Activated CD4-positive, alpha-beta memory T cell treated with anti-CD3 and anti-CD28 coated beads, Interleukin-2, amount 10 ng/mL, durations not matched to agents 7 days and 5 days (primary cell): ENCODE measurements at regions of chr15 and their contacts with region 1.

Region 1: GRCh38 chr15:81274931-81275707 is 48.8 kb downstream of the STARD5 start:
- DNase-seq: peak; percentile 85
- H3K4me3 Mint-ChIP-seq: no peak overlapping the region
- H3K27ac Mint-ChIP-seq: peak overlapping the region; percentile 6
- H3K4me1 Mint-ChIP-seq: peaks cover 20% of the 10 kb centered on the region
- H3K27me3 Mint-ChIP-seq: no peaks in the 10 kb centered on the region

Region 2: GRCh38 chr15:81296673-81297072 is 21.6 kb after region 1 on chr15:
- CTCF ChIA-PET with region 1: interaction called, 31 read pairs
- POLR2A ChIA-PET with region 1: interaction called, 7 read pairs
- DNase-seq: peak; percentile 87
- H3K4me3 Mint-ChIP-seq: peak overlapping the region; percentile 98
- H3K27ac Mint-ChIP-seq: peak overlapping the region; percentile 96
- H3K4me1 Mint-ChIP-seq: peaks cover 64% of the 10 kb centered on the region
- H3K27me3 Mint-ChIP-seq: no peaks in the 10 kb centered on the region

Region 3: DNA sequence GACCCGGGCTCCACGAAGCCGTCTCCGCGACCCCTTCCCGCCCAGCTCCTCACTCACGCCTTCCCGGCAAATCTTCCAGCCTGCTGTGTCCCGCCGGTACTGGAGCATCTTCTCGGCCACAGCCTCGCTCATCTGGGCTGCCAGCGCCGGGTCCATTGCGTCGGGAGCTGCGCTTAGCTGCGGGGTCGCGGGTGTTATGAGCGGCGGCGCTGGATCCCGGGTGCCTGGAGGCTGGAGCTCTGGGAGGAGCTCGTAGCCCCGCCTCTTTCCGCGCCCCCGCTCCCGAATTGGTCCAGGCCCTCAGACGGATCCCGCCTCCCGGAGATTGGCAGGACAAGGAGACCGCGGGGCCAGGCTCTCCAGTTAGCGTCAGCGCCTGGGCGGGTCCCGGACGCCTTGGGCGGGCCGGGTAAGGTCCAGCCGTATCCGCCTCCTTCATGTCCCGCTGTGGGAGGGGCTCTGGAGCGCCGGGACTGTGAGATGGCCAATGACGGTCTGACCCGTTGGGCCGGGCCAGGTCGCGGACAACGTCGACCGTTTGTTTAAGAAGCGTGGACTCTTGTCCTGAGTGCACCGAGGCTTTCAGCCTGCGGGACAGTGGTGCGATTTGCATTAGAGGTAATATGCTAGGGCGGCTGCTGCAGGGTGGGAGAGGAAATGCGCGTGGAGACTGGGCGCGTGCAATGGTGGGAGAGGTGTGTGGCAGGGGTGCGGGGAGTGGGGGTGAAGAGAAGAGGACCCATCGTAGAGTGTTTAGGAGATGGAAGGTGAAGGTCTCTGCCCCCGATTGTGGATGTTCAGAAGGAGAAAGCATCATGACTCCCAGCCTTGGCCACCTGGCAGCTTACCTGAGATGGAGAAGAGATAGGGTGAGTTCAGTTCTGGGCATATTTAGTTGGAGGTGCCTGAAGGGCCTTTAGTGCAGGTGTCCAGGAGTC is 49.1 kb after region 1 on chr15 and contains the start of gene STARD5:
- CTCF ChIA-PET with region 1: interaction called, 14 read pairs
- POLR2A ChIA-PET with region 1: no interaction called
- DNase-seq: peak; percentile 97
- H3K4me3 Mint-ChIP-seq: peak within 1 kb of the TSS; percentile 85
- H3K27ac Mint-ChIP-seq: peak within 1 kb of the TSS; percentile 72
- H3K4me1 Mint-ChIP-seq: peaks cover 26% of the 10 kb centered on the region
- H3K27me3 Mint-ChIP-seq: no peaks in the 10 kb centered on the region
- total RNA-seq, gene STARD5: 4.2 TPM

Region 4: GRCh38 chr15:81394603-81395002 is 119.5 kb after region 1 on chr15:
- CTCF ChIA-PET with region 1: interaction called, 84 read pairs
- POLR2A ChIA-PET with region 1: no interaction called
- DNase-seq: no peak
- H3K4me3 Mint-ChIP-seq: no peak overlapping the region
- H3K27ac Mint-ChIP-seq: no peak overlapping the region
- H3K4me1 Mint-ChIP-seq: no peaks in the 10 kb centered on the region
- H3K27me3 Mint-ChIP-seq: no peaks in the 10 kb centered on the region